Activated T-helper 2 cell treated with anti-CD3 and anti-CD28 coated beads, Interferon-gamma antibody, Interleukin-2, Interleukin-4, amounts not matched to agents 10 μg/mL and 5 μg/mL and 100 μg/mL, durations not matched to agents 14 hours and 24 hours and 36 hours (primary cell): ENCODE measurements at regions of chr5 and their contacts with region 1.

Region 1: DNA sequence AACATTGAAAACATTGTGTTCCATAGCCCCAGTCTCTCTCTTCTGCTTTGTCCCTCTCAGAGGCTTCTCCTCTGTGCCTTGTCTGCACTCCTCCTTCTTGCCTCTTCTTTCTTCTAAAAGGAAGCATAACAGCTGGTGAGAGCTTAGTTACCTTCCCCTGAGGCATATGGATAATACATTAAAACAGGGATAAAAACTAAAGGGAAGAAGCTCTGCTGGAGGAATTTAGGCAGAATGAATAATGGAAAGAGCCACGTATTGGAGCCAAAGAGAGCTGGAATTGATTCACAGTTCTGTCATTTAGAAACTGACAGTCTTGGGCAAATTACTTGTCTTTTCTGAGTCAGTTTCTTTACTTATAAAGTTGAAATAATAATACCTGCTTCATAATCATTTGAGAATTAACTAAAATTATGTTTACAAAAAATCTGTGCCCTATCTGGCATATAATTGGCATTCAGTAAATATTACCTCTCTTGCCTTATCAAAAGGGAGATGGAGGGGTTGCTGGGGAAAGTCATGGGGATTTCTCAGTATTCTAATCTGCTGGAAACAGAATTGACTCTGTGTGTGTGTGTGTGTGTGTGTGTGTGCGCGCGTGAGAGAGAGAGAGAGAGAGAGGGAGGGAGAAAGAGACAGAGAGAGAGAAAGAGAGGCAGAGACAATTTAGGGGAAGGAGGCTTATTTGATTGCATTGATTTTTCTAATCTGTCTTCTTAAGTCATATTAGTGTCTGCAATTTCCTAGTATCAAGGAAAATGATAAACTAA is 20.2 kb downstream of the ZNF474 start:
- DNase-seq: no peak
- H3K4me3 Mint-ChIP-seq: no peak overlapping the region
- H3K27ac Mint-ChIP-seq: peak overlapping the region; percentile 31
- H3K4me1 Mint-ChIP-seq: peaks cover 11% of the 10 kb centered on the region
- H3K27me3 Mint-ChIP-seq: no peaks in the 10 kb centered on the region

Region 2: DNA sequence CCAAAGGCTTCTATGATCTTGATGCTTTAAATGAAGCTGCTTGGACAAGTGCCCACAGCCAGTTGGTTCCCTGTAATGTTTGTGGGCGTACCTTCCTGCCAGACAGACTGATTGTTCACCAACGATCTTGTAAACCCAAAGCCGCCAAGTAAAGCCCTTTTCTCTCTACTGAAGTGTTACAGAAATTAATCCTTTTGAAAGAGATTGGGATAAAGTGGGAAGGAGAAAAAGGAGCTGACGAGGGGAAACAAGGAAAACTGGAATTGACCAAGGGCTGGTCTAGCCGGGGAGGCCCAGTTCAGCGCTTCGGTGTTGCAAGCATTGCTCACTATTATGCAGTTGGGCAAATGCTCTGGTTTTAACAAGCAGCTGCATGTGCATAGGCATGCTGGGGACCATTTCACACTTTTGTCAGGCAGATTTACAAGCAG is 33.0 kb after region 1 on chr5:
- intact Hi-C with region 1: loop called (anchors 5 kb)
- DNase-seq: no peak
- H3K4me3 Mint-ChIP-seq: no peak overlapping the region
- H3K27ac Mint-ChIP-seq: no peak overlapping the region
- H3K4me1 Mint-ChIP-seq: peaks cover 10% of the 10 kb centered on the region
- H3K27me3 Mint-ChIP-seq: no peaks in the 10 kb centered on the region

Region 3: DNA sequence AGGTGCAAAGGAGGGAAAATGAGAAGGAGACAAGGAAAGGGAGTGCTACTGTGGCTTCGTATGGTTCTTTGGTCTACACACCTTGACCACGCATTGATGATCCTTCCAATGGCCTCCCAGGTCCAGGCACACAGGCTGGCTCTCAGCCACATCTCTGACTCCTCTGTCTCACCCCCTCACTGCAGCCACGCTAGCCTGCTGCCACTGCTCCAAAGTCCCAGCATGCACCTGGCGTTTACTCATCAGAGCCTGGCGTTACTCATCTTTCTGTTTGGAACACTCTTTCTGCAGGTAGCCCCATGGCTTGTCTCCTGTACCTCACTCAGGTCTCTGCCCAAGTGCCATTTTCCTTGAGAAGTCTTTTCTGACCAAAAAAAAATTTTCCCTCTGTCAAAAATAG is 358.1 kb after region 1 on chr5:
- intact Hi-C with region 1: no loop called
- DNase-seq: no peak
- H3K4me3 Mint-ChIP-seq: no peak overlapping the region
- H3K27ac Mint-ChIP-seq: no peak overlapping the region
- H3K4me1 Mint-ChIP-seq: no peaks in the 10 kb centered on the region
- H3K27me3 Mint-ChIP-seq: no peaks in the 10 kb centered on the region

Region 4: GRCh38 chr5:122559676-122560075 is 410.2 kb after region 1 on chr5:
- intact Hi-C with region 1: no loop called
- DNase-seq: no peak
- H3K4me3 Mint-ChIP-seq: no peak overlapping the region
- H3K27ac Mint-ChIP-seq: no peak overlapping the region
- H3K4me1 Mint-ChIP-seq: no peaks in the 10 kb centered on the region
- H3K27me3 Mint-ChIP-seq: no peaks in the 10 kb centered on the region